ENCODE measurements at regions of chr1 and their contacts with region 1.

Region 1: GRCh38 chr1:26417111-26417759 is 6.6 kb downstream of the LIN28A start:
- DNase-seq: peak; percentile 90
- ATAC-seq: peak; percentile 99
- H3K4me3 Mint-ChIP-seq: no peak overlapping the region
- H3K27ac Mint-ChIP-seq: no peak overlapping the region
- H3K4me1 Mint-ChIP-seq: peaks cover 2% of the 10 kb centered on the region
- H3K27me3 Mint-ChIP-seq: peaks cover 57% of the 10 kb centered on the region

Region 2: DNA sequence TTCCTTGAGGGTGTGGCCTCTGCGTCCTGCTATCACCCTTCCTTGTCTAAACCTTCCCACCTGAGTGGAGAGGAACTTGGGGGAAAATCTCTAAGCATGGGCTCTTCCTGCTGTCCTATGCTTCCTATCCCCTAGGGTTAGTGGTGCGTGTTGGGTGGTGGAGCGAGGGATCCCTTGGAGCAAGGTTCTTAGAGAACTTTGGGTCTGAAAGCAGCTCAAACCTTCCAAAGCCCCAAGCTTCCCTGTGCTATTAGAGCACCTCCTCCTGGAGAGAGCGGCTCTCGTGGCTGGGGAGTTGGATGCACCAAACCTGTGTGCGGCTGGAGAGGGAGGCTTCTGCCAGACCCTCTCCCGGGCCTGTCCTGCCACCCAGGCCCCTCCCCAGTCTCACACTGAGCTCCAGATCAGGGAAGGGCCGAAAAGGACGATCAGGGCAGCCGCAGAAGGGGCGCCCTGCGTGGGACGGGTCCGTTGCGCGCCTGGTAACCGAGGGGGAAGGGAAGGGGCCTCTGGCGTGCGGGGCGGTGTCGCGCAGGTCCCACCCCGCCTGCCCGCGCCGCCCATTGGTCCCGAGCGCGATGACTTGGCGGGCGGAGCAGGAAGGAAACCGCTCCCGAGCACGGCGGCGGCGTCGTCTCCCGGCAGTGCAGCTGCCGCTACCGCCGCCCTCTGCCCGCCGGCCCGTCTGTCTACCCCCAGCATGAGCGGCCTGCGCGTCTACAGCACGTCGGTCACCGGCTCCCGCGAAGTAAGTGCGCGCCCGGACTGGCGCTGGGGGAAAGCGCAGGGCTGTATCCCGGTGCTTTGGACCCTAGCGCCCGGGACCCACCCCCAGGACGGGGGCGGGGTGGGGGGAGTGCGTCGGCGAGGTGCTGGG is 137.5 kb before region 1 on chr1 and contains the start of gene SH3BGRL3:
- CTCF ChIA-PET with region 1: interaction called, 59 read pairs
- DNase-seq: peak; percentile 90
- ATAC-seq: peak; percentile 66
- H3K4me3 Mint-ChIP-seq: peak within 1 kb of the TSS; percentile 89
- H3K27ac Mint-ChIP-seq: peak within 1 kb of the TSS; percentile 99
- H3K4me1 Mint-ChIP-seq: peaks cover 84% of the 10 kb centered on the region
- H3K27me3 Mint-ChIP-seq: no peaks in the 10 kb centered on the region
- total RNA-seq, gene SH3BGRL3: 562 to 632 TPM

Region 3: GRCh38 chr1:26345718-26346549 is 71.3 kb before region 1 on chr1:
- CTCF ChIA-PET with region 1: interaction called, 10 read pairs
- DNase-seq: no peak
- ATAC-seq: no peak
- H3K4me3 Mint-ChIP-seq: no peak overlapping the region
- H3K27ac Mint-ChIP-seq: no peak overlapping the region
- H3K4me1 Mint-ChIP-seq: no peaks in the 10 kb centered on the region
- H3K27me3 Mint-ChIP-seq: peaks cover 6% of the 10 kb centered on the region

Region 4: DNA sequence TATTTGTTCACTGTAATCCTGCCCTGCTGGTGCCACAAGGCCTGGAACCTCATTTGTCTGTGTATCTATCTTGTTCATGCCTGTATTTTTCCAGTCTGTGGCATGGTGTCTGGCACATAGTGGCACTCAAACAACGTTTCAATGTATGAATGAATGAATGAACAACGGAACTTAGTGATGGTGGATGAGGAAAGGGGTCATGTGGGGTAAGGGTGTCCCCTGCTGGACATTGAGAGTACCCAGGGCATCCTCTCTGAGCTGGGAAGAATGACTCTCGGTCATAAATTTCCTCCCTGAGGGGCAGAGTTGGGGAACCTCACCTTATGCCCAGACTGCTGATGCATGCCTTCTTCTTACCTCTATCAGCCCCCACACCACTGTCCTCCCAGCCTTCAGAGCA is 25.8 kb before region 1 on chr1:
- CTCF ChIA-PET with region 1: interaction called, 25 read pairs
- DNase-seq: peak; percentile 78
- ATAC-seq: peak; percentile 80
- H3K4me3 Mint-ChIP-seq: no peak overlapping the region
- H3K27ac Mint-ChIP-seq: peak overlapping the region; percentile 62
- H3K4me1 Mint-ChIP-seq: peaks cover 55% of the 10 kb centered on the region
- H3K27me3 Mint-ChIP-seq: peaks cover 4% of the 10 kb centered on the region

Region 5: DNA sequence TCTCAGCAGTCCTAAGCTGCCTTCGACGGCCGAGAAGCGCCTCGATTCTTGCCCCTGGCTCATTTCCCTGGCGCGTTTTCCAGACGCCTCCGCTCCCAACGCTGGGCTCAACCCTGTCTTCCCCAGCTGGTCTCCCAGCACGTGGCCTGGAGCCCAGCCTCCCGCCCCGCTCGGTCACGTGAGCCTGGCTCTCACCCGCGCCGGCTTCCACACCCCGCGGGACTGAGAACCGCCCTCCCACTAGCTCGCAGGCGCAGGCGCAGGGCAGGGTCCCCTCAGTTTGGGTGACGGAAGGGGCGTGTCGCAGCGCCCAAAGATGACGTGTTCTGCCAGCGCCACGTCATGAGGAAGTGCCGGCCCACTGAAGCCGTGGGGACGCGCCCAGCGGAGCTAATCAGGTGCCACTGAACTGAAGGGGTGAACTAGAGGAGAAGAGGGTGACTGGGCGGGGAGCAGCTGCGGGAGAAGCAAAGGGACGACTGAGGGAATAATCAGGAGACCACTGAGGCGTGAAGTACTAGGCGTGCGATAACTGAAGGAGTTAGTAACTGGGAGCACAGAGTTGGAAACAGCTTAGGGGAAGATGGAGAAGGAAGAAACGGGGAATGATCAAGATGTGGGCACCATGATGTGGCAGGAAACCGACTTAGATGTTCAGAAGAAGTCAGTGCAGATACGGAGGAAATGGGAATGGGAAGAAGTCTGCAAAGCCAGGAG is 14.9 kb after region 1 on chr1 and contains the start of gene DHDDS:
- CTCF ChIA-PET with region 1: interaction called, 54 read pairs
- DNase-seq: peak; percentile 99
- ATAC-seq: peak; percentile 98
- H3K4me3 Mint-ChIP-seq: peak within 1 kb of the TSS; percentile 97
- H3K27ac Mint-ChIP-seq: peak within 1 kb of the TSS; percentile 91
- H3K4me1 Mint-ChIP-seq: peaks cover 32% of the 10 kb centered on the region
- H3K27me3 Mint-ChIP-seq: peaks cover 13% of the 10 kb centered on the region
- total RNA-seq, gene DHDDS: 49.2 to 54.0 TPM

Region 6: GRCh38 chr1:26555550-26556510 is 138.6 kb after region 1 on chr1:
- CTCF ChIA-PET with region 1: no interaction called
- DNase-seq: no peak
- ATAC-seq: no peak
- H3K4me3 Mint-ChIP-seq: no peak overlapping the region
- H3K27ac Mint-ChIP-seq: no peak overlapping the region
- H3K4me1 Mint-ChIP-seq: peaks cover 29% of the 10 kb centered on the region
- H3K27me3 Mint-ChIP-seq: no peaks in the 10 kb centered on the region

Region 7: DNA sequence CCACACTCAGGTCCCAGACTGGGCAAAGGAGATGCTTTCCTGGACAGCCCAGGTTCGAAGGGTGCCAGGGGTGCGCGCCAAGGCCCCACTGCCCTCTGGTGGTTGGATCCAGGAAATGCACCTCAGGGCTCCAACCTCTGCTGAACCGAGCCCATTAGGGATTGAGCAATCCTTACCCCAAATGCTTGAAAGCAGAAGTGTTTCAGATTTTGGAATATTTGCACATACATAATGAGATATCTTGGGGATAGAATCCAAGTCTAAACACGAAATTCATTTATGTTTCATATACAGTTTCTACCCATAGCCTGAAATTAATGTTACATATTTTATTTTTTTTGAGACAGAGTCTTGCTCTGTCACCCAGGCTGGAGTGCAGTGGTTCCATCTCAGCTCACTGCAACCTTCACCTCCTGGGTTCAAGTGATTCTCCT is 680.3 kb after region 1 on chr1:
- CTCF ChIA-PET with region 1: no interaction called
- DNase-seq: peak; percentile 85
- ATAC-seq: peak; percentile 87
- H3K4me3 Mint-ChIP-seq: no peak overlapping the region
- H3K27ac Mint-ChIP-seq: no peak overlapping the region
- H3K4me1 Mint-ChIP-seq: peaks cover 23% of the 10 kb centered on the region
- H3K27me3 Mint-ChIP-seq: no peaks in the 10 kb centered on the region

Measured in activated CD8-positive, alpha-beta memory T cell treated with anti-CD3 and anti-CD28 coated beads, Interleukin-2, amount 10 ng/mL, durations not matched to agents 7 days and 5 days (primary cell).